Mammary epithelial cell (primary cell): ENCODE measurements at regions of chr1 and their contacts with region 1.

Region 1: GRCh38 chr1:203486618-203487370 is 7.2 kb upstream of the OPTC start:
- DNase-seq: no peak
- H3K4me3 ChIP-seq: no peak overlapping the region
- H3K27ac ChIP-seq: no peak overlapping the region
- H3K4me1 ChIP-seq: peaks cover 5% of the 10 kb centered on the region
- H3K27me3 ChIP-seq: no peaks in the 10 kb centered on the region
- CTCF ChIP-seq: no peak

Region 2: DNA sequence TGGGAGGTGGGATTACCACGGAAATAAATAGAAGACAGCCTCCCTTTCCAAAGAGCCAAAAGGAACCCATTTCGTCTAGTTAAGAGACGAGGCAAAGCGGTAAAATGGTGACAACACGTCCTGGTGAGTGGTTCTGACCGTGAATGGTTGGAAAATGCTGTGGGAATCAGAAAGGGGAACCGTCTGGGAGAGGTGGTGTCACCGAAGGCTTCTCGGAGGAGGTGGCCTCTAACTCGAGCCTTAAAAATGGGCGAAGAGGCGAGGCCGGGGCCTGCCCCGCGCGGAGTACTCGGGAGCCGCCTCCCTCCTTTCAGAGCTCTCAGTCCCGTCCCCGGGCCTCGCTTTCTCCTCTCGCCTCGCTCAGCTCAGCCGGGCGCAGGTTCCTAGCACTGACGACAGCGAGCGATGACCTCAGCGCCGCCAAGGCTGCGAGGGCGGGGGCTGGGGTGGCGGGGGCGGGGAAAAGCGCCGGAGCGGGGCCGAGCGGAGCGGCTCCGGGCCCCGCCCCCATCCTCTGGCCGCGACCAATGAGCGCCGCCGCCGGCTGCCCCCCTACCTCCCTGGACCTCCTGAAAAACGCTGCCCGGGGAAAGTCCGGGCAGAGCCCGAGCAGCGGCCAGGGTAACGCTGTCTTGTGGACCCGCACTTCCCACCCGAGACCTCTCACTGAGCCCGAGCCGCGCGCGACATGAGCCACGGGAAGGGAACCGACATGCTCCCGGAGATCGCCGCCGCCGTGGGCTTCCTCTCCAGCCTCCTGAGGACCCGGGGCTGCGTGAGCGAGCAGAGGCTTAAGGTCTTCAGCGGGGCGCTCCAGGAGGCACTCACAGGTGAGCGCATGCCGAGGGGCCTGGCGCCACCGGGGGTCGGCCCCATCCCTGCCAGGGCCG is 181.6 kb before region 1 on chr1 and contains the start of gene BTG2:
- CTCF ChIA-PET with region 1: no interaction called
- dilution Hi-C with region 1: no loop called
- in situ Hi-C with region 1: no loop called
- intact Hi-C with region 1: loop called (anchors 1 kb)
- DNase-seq: peak; percentile 91
- H3K4me3 ChIP-seq: peak within 1 kb of the TSS; percentile 86 to 94 (median 93)
- H3K27ac ChIP-seq: peak within 1 kb of the TSS; percentile 82
- H3K4me1 ChIP-seq: peaks cover 44% of the 10 kb centered on the region
- H3K27me3 ChIP-seq: no peaks in the 10 kb centered on the region
- CTCF ChIP-seq: no peak
- total RNA-seq, gene BTG2: 74.8 to 107 TPM

Region 3: DNA sequence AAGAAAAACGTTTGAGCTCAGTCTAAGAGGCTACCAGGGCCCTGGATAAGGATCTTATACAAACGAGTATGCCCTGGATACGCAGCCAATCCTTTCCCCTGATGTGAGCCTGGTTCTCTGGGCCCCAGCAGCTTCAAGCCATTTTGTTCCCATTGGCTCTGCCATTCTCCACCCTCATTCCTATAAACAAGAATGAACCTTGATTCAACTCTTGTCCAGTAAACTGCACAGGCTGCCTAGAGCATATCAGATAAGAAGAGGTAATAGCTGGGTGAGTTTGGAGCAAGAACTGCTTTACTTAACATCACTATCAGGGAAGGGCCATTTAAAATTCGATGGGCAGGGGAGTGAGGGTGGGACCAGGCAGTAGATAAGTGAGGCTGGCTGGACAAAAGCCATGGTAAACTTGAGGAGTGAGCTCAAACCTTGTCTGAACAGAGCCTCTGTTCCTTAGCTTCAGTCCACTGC is 170.1 kb before region 1 on chr1:
- CTCF ChIA-PET with region 1: no interaction called
- dilution Hi-C with region 1: no loop called
- in situ Hi-C with region 1: no loop called
- intact Hi-C with region 1: no loop called
- DNase-seq: no peak
- H3K4me3 ChIP-seq: no peak overlapping the region
- H3K27ac ChIP-seq: no peak overlapping the region
- H3K4me1 ChIP-seq: peaks cover 3% of the 10 kb centered on the region
- H3K27me3 ChIP-seq: no peaks in the 10 kb centered on the region
- CTCF ChIP-seq: no peak

Region 4: DNA sequence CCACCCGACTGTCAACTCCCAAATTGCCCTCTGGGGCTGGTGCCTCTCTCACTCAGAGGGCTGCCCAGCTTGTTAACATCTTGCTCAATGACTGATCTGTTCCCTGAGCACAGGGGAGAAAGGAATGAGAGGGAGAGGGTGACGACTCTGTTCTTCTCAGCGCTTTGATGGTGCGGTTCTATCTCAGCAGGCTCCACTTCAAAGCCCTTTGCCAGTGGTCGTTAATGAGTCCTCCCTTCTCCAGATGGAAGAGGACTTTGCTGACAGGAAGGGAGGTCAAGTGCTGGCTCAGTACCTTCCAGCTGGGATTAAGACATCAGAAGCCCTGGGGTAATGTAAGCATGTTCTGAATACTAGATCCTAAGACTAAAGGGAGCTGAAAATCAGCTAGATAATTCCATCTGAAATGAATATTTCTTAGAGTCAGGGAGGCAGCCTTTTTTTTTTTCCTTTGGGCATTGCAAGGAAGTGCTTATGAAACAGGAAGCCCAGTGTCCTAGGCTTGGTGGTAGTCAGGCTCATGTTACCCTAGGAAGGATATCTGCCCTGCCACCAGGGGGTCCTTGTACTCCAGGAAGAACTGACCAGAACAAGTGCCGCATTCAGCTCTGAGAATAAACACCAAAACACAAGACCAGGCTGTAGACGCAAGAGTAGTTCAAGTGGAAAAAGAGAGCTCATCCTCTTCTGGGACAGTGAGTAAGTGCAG is 140.6 kb before region 1 on chr1:
- CTCF ChIA-PET with region 1: interaction called, 3 read pairs
- dilution Hi-C with region 1: no loop called
- in situ Hi-C with region 1: loop called in 1 of 2 experiments (anchors 5 kb)
- intact Hi-C with region 1: no loop called
- DNase-seq: no peak
- H3K4me3 ChIP-seq: no peak overlapping the region
- H3K27ac ChIP-seq: no peak overlapping the region
- H3K4me1 ChIP-seq: peaks cover 5% of the 10 kb centered on the region
- H3K27me3 ChIP-seq: no peaks in the 10 kb centered on the region
- CTCF ChIP-seq: peak in 1 of 2 donors; percentile 2

Region 5: DNA sequence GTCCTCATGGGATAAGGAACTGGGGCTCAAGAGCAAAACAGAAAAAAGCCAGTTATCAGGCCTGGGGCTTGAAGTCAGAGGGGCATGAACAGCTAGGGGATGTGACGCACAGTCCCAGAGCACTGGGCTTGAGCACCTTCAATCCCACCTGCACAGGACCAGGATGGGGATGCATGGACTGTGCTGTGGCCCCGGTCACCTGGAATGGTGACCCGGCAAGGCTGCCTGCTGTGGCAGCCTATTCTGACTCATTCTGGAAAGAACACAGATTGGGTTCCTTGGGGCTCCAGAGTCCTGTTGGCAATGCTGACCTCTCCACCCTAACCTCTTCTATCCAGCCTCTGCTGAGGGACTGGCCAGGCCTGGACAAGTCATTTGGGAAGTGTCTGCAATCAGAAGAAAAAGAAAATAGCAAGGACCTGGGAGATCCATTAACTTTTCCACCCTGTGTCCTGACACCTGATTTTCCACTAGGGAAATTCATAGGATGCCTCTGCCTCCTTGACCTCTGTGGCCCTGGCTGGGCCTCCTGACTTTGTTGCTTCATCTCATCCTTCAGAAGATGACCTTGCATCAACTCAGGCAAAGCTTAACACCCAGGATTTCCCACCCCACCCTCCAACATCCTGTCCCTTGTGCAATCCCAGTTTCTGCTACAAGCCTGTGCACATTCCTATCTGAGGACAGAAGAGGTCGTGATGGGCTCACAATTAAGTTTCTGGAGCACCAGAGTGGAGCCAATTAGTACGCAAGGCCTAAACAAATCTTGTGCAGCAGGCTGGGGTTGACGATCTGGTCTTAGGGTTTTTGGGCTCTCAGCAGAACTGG is 118.0 kb before region 1 on chr1:
- CTCF ChIA-PET with region 1: interaction called, 7 read pairs
- dilution Hi-C with region 1: no loop called
- in situ Hi-C with region 1: loop called in 1 of 2 experiments (anchors 10 kb)
- intact Hi-C with region 1: loop called (anchors 1 kb)
- DNase-seq: peak; percentile 81
- H3K4me3 ChIP-seq: no peak overlapping the region
- H3K27ac ChIP-seq: no peak overlapping the region
- H3K4me1 ChIP-seq: peaks cover 14% of the 10 kb centered on the region
- H3K27me3 ChIP-seq: no peaks in the 10 kb centered on the region
- CTCF ChIP-seq: peak; percentile 53 to 66

Region 6: GRCh38 chr1:203402629-203403337 is 84.0 kb before region 1 on chr1:
- CTCF ChIA-PET with region 1: no interaction called
- dilution Hi-C with region 1: no loop called
- in situ Hi-C with region 1: no loop called
- intact Hi-C with region 1: no loop called
- DNase-seq: peak; percentile 58
- H3K4me3 ChIP-seq: no peak overlapping the region
- H3K27ac ChIP-seq: no peak overlapping the region
- H3K4me1 ChIP-seq: peaks cover 2% of the 10 kb centered on the region
- H3K27me3 ChIP-seq: peaks cover 2% of the 10 kb centered on the region
- CTCF ChIP-seq: no peak

Region 7: DNA sequence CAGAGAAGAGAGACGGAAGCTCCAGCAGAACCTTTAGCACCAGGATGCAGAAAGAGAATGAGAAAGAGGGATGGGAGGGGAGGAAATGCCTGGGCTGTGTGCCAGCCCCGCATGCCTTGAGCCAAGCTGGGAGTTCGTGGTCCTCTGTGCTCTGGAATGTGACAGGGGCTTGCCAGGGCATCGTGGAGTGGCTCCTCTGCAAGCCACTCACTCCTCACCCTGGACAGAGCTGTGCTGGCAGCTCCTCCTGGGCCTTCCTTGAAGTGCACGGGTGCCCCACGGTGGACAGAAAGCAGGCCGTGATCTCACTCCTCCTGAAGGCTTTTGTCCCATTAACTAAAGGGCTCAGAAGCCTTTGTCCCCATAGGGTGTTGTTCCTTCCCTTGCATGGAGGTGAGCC is 46.0 kb before region 1 on chr1:
- CTCF ChIA-PET with region 1: no interaction called
- dilution Hi-C with region 1: no loop called
- in situ Hi-C with region 1: no loop called
- intact Hi-C with region 1: loop called (anchors 1 kb)
- DNase-seq: peak; percentile 30
- H3K4me3 ChIP-seq: no peak overlapping the region
- H3K27ac ChIP-seq: no peak overlapping the region
- H3K4me1 ChIP-seq: no peaks in the 10 kb centered on the region
- H3K27me3 ChIP-seq: peaks cover 2% of the 10 kb centered on the region
- CTCF ChIP-seq: peak; percentile 12 to 58

Region 8: DNA sequence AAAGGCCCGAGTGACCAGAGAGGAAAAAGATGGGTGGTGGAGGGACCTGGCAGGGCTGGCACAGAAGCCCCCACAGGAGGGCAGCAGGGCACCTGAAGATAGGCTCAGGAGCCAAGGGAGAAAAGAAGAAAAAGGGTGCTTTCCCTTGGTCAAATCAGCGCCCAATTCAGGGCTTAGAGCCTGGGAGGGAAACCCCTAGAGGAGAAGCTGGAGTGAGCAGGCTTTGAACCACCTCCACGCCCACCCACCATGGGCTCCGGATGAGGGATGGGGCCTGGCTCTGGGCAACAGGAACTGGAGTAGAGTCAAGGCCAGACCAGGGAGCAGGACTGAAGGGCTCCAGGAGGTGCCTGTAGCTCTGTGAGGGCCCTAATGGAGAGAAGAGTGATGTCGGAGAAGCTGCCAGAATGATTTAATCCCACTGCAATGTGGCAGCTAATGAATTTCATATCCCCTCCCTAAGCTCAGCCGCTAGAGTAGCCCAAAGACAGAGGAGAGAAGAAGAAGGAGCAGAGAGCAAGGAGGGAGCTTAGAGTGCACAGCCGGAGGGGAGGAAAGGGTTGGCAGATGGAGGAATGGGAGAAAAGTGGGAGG is 23.2 kb before region 1 on chr1:
- CTCF ChIA-PET with region 1: no interaction called
- dilution Hi-C with region 1: no loop called
- in situ Hi-C with region 1: no loop called
- intact Hi-C with region 1: loop called (anchors 1 kb)
- DNase-seq: no peak
- H3K4me3 ChIP-seq: no peak overlapping the region
- H3K27ac ChIP-seq: no peak overlapping the region
- H3K4me1 ChIP-seq: peaks cover 17% of the 10 kb centered on the region
- H3K27me3 ChIP-seq: no peaks in the 10 kb centered on the region
- CTCF ChIP-seq: peak in 1 of 2 donors; percentile 8